PC-9 (cell line): ENCODE measurements at regions of chr16 and their contacts with region 1.

Region 1: DNA sequence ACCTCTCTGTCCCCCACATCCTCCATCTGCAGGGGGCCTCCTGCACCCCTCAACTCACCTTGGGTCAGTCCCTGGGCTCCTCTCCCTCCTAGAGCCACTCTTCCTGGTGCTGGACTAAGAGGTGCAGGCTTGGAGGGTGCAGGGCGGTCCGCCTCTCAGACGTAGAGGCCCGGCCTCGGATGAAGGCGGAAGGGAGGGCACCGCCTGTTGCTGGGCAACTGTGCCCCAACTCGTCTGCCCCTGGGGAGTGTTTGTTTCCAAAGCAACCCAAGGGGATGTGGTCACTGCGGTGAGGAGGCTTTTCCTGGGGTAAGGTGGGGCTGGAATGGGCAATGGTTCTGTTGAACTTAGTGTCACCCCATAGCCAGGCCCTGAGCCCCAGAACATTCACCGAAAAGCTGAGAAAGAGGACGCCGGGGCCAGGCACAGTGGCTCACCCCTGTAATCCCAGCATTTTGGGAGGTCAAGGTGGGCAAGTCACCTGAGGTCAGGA is at the start of gene C16orf54:
- DNase-seq: no peak
- H3K4me3 ChIP-seq: no peak within 1 kb of the TSS
- H3K27ac ChIP-seq: no peak within 1 kb of the TSS
- H3K4me1 ChIP-seq: no peaks in the 10 kb centered on the region
- H3K27me3 ChIP-seq: no peaks in the 10 kb centered on the region
- CTCF ChIP-seq: no peak
- total RNA-seq, gene C16orf54: not detected in 2 replicates

Region 2: GRCh38 chr16:29757950-29758466 is 12.1 kb after region 1 on chr16:
- CTCF ChIA-PET with region 1: no interaction called
- POLR2A ChIA-PET with region 1: interaction called, 17 read pairs
- intact Hi-C with region 1: no loop called
- DNase-seq: no peak
- H3K4me3 ChIP-seq: no peak overlapping the region
- H3K27ac ChIP-seq: peak overlapping the region; percentile 45
- H3K4me1 ChIP-seq: peaks cover 14% of the 10 kb centered on the region
- H3K27me3 ChIP-seq: no peaks in the 10 kb centered on the region
- CTCF ChIP-seq: peak; percentile 39; the same call in 1 of the 2 replicates

Region 3: GRCh38 chr16:29765167-29766032 is 19.5 kb after region 1 on chr16:
- CTCF ChIA-PET with region 1: no interaction called
- POLR2A ChIA-PET with region 1: interaction called, 17 read pairs
- intact Hi-C with region 1: no loop called
- DNase-seq: peak; percentile 67 to 92
- H3K4me3 ChIP-seq: no peak overlapping the region
- H3K27ac ChIP-seq: peak overlapping the region; percentile 47
- H3K4me1 ChIP-seq: peaks cover 27% of the 10 kb centered on the region
- H3K27me3 ChIP-seq: no peaks in the 10 kb centered on the region
- CTCF ChIP-seq: no peak

Region 4: DNA sequence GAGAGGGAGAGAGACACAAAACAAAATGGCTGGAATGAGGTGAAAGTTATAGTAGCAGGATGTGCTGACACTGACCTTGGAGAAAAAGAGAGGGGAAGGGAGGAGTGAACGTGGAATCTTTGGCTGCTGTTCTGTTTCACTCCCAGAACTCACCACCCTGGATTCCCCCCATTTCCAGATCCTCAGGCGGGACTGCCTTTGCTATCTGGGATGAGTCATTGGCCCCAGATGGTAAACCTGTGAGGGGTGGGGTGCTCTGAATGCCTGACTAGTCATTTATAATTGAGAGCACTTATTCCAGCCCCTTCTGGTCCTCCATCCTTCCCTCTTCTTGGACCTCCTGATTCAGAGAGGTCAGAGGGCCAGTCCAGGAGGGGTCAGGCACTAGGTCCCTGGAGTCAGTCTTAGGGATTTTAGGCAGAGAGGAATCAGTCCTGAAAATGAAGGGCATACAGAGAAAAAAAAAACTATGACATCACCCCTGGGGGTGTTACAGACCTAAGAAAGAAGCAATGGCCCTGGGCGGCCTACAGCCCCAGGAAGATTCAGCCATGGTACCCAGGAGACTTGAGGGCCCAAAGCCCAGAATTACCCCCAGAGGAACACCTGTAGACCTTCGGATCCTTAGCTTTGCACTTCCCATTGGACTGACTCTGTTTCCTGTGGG is 30.0 kb after region 1 on chr16:
- CTCF ChIA-PET with region 1: no interaction called
- POLR2A ChIA-PET with region 1: no interaction called
- intact Hi-C with region 1: no loop called
- DNase-seq: peak; percentile 71 to 79
- H3K4me3 ChIP-seq: no peak overlapping the region
- H3K27ac ChIP-seq: no peak overlapping the region
- H3K4me1 ChIP-seq: peaks cover 68% of the 10 kb centered on the region
- H3K27me3 ChIP-seq: no peaks in the 10 kb centered on the region
- CTCF ChIP-seq: no peak